Activated CD4-positive, alpha-beta memory T cell treated with anti-CD3 and anti-CD28 coated beads for 36 hours (primary cell): ENCODE measurements at regions of chrX and their contacts with region 1.

Region 1: DNA sequence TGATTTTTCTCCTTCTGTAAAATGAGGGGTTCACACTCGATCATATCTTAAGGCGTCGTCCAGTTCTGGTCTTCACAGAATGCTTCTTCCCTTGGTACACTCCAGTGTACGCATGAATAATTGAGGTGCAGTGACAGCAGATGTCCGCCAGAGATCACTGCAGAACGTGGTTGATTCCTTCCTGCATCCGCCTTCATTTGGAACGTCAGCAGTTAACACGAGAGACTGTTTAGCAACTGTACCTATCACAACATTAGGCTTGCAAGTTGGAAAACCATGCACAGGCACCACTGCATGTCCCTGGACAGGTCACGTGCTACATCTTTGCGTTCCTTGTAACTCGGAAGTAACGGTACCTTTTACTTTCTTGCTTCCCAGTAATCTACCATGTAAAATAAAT is 66.0 kb upstream of the GEMIN8 start:
- DNase-seq: peak; percentile 50
- H3K4me3 Mint-ChIP-seq: no peak overlapping the region
- H3K27ac Mint-ChIP-seq: no peak overlapping the region
- H3K4me1 Mint-ChIP-seq: no peaks in the 10 kb centered on the region
- H3K27me3 Mint-ChIP-seq: no peaks in the 10 kb centered on the region

Region 2: DNA sequence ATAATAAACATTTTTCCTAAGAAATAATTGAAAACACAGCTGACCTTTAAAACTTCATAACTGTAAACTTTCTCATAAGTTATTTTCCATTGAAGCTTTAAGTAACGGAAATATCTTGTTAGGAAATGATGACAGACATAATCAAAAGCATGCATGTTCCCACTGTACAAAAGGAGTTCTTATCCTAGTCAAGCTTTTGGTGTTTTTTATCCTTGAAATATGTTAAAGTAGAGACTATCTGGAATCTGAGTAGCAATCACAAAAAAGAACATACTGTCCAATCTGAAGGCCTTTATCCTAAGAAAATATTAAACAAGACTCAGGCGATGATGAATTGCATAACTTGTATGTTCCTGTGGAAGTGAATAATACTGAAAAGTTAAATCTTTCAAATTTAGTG is 80.4 kb before region 1 on chrX:
- CTCF ChIA-PET with region 1: no interaction called
- POLR2A ChIA-PET with region 1: no interaction called
- intact Hi-C with region 1: no loop called
- DNase-seq: no peak
- H3K4me3 Mint-ChIP-seq: no peak overlapping the region
- H3K27ac Mint-ChIP-seq: no peak overlapping the region
- H3K4me1 Mint-ChIP-seq: peaks cover 18% of the 10 kb centered on the region
- H3K27me3 Mint-ChIP-seq: no peaks in the 10 kb centered on the region

Region 3: DNA sequence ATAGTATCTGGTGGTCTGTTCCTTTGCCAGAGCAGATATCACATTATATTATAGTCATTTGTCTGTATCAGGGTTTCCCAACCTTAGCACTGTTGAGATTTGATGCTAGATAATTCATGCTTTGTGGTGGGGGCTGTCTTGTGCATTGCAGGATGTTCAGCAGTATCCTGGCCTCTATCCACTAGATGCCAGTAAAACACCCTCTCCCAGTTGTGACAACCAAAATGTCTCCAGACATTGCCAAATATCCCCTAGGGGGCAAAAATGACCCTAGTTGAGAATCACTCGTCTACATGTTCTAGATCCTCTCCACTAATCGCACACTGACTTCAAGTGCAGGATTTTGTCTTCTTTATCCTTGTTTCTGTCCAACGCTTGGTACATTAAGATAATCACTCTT is 616.4 kb after region 1 on chrX:
- CTCF ChIA-PET with region 1: no interaction called
- POLR2A ChIA-PET with region 1: no interaction called
- intact Hi-C with region 1: loop called (anchors 10 kb)
- DNase-seq: no peak
- H3K4me3 Mint-ChIP-seq: no peak overlapping the region
- H3K27ac Mint-ChIP-seq: no peak overlapping the region
- H3K4me1 Mint-ChIP-seq: no peaks in the 10 kb centered on the region
- H3K27me3 Mint-ChIP-seq: no peaks in the 10 kb centered on the region

Region 4: DNA sequence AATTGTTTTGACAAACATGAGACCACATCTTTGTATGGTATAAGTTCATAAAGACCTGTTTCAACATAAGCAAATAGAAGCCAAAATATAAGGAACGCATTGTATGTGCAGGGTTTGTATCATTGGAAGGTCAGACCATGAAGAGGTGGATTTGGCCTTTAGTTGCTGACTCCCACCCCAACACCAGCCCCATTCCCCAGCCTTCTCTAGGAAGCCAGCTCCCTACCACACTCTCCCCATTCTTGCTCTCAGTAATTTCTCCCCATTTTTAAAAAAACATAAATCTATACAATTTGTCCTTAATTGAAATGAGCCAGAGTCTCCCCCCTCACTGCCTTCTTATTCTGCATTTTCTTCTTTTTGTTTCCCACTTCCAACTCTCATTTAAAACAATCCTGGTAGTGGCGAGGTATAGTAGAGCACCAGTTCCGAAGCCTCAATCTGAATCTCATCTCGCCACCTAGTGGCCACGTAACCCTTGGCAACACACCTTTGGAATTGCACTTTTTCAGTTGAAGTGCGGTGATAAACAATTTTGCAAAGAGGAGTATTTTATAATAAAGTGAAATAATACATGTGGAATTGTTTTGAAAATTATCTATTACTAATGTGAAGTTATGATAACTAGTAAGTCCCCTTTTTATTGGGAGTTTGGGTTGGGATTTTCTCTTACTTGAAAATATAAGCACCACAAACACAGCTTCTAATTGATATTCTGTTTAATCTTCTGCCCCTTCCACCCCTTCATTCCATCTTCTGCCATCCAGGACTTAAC is 1047.5 kb after region 1 on chrX:
- CTCF ChIA-PET with region 1: interaction called, 3 read pairs
- POLR2A ChIA-PET with region 1: no interaction called
- intact Hi-C with region 1: loop called (anchors 1 kb)
- DNase-seq: peak; percentile 59
- H3K4me3 Mint-ChIP-seq: no peak overlapping the region
- H3K27ac Mint-ChIP-seq: no peak overlapping the region
- H3K4me1 Mint-ChIP-seq: peaks cover 15% of the 10 kb centered on the region
- H3K27me3 Mint-ChIP-seq: no peaks in the 10 kb centered on the region